Tibial artery (tissue), 4 donors: ENCODE measurements at regions of chr4 and their contacts with region 1.

Region 1: GRCh38 chr4:120049732-120050494 is 16.7 kb downstream of the MAD2L1 start:
- DNase-seq: peak; percentile 88 to 89
- H3K4me3 ChIP-seq: peak overlapping the region; percentile 38 to 39
- H3K27ac ChIP-seq: peak overlapping the region; percentile 73
- H3K4me1 ChIP-seq: peaks cover 0 to 20% (median 5%) of the 10 kb centered on the region in 4 donors
- H3K27me3 ChIP-seq: no peaks in the 10 kb centered on the region
- CTCF ChIP-seq: peak; percentile 80 to 87

Region 2: DNA sequence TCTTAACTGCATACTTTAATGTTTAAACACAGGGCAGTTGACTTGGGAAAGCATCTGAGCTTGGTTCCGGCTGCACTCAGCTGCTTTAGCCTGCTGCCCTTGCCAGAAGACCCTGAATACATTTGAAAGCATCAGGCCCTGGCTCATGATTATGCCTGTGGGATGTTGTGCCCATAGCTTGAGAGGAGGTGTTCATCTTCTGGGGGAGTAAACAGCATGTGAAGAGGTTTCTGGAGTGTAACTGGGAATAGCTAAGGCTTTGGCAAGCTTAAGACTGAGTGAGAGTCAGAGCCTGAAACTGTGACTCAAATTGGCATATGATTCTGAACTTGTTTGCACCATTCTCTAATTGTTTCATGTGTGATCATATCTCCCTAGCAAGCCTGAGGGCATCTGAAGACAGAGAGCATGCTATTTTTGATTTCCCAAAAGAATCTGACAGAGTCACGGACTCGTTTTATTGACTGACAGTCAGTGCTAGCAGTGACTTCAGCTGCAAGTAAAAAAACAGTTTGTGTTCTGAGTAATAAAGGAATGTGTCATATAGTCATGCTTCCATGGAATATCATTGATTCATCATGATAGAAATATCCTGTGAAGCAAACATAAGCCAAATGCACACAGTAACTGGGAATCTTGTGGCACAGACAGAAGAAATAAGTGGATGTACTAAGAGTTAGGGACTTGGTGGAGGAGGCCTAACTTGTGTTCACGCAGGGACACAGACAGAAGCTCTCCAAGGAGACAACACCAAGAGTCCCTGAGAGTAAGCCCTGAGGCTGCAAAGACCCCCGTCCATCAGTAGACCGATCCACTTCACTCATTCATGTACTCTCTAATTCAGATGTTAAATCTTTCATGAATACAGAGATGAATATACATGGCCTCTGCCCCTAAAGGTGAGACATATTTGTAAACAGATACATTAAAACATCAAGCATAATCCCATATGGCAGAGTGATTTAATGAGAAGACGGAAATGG is 1060.5 kb before region 1 on chr4:
- intact Hi-C with region 1: loop called (anchors 5 kb)
- DNase-seq: no peak
- H3K4me3 ChIP-seq: no peak overlapping the region
- H3K27ac ChIP-seq: peak overlapping the region; percentile 86
- H3K4me1 ChIP-seq: peaks cover 0 to 100% (median 53%) of the 10 kb centered on the region in 4 donors
- H3K27me3 ChIP-seq: no peaks in the 10 kb centered on the region
- CTCF ChIP-seq: no peak

Region 3: GRCh38 chr4:119559044-119559647 is 490.8 kb before region 1 on chr4:
- intact Hi-C with region 1: loop called (anchors 5 kb)
- DNase-seq: no peak
- H3K4me3 ChIP-seq: no peak overlapping the region
- H3K27ac ChIP-seq: peak overlapping the region in 1 of 2 donors; percentile 20
- H3K4me1 ChIP-seq: peaks cover 0 to 4% (median 0%) of the 10 kb centered on the region in 4 donors
- H3K27me3 ChIP-seq: no peaks in the 10 kb centered on the region
- CTCF ChIP-seq: peak; percentile 48 to 56

Region 4: DNA sequence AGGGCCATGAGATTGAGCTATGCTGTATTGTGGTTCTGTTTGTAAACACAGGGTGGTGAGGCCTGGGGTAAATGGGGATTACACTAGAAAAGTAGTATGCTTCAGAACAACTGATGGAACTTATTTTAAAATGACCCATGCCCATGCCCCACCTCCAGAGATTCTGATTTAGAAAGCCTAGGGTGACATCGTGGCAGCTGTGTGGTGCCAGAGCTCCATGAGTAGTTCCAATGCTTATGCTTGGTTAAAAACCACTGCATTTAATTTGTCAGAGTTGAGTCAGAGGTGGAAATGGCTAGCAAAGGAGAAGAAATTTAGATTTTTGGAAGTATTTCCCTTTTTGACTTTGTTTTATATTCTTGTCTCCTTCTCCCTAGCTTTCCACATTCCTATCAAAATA is 357.9 kb before region 1 on chr4:
- intact Hi-C with region 1: loop called (anchors 5 kb)
- DNase-seq: peak in 1 of 2 donors; percentile 28
- H3K4me3 ChIP-seq: no peak overlapping the region
- H3K27ac ChIP-seq: peak overlapping the region in 1 of 2 donors; percentile 32
- H3K4me1 ChIP-seq: peaks cover 0 to 12% (median 0%) of the 10 kb centered on the region in 4 donors
- H3K27me3 ChIP-seq: no peaks in the 10 kb centered on the region
- CTCF ChIP-seq: peak; percentile 25 to 56

Region 5: GRCh38 chr4:119897260-119897659 is 152.7 kb before region 1 on chr4:
- intact Hi-C with region 1: no loop called
- DNase-seq: no peak
- H3K4me3 ChIP-seq: no peak overlapping the region
- H3K27ac ChIP-seq: no peak overlapping the region
- H3K4me1 ChIP-seq: no peaks in the 10 kb centered on the region
- H3K27me3 ChIP-seq: no peaks in the 10 kb centered on the region
- CTCF ChIP-seq: no peak

Region 6: GRCh38 chr4:121696581-121697461 is 1646.9 kb after region 1 on chr4 and contains the start of gene ANXA5:
- intact Hi-C with region 1: no loop called
- DNase-seq: peak; percentile 82 to 95
- H3K4me3 ChIP-seq: peak within 1 kb of the TSS; percentile 70 to 98
- H3K27ac ChIP-seq: peak within 1 kb of the TSS; percentile 95 to 100
- H3K4me1 ChIP-seq: peaks cover 0 to 48% (median 15%) of the 10 kb centered on the region in 4 donors
- H3K27me3 ChIP-seq: no peaks in the 10 kb centered on the region
- CTCF ChIP-seq: peak in 1 of 2 experiments; percentile 14